Activated CD8-positive, alpha-beta T cell treated with anti-CD3 and anti-CD28 coated beads, Interleukin-2, amount 10 ng/mL, durations not matched to agents 7 days and 5 days (primary cell): ENCODE measurements at regions of chr3 and their contacts with region 1.

Region 1: GRCh38 chr3:112979240-112979832 is 4.4 kb upstream of the CD200R1 start:
- DNase-seq: peak; percentile 47
- ATAC-seq: no peak
- H3K4me3 Mint-ChIP-seq: no peak overlapping the region
- H3K27ac Mint-ChIP-seq: no peak overlapping the region
- H3K4me1 Mint-ChIP-seq: peaks cover 37% of the 10 kb centered on the region
- H3K27me3 Mint-ChIP-seq: no peaks in the 10 kb centered on the region

Region 2: GRCh38 chr3:112635671-112636070 is 343.7 kb before region 1 on chr3:
- CTCF ChIA-PET with region 1: interaction called, 10 read pairs
- POLR2A ChIA-PET with region 1: no interaction called
- DNase-seq: no peak
- ATAC-seq: no peak
- H3K4me3 Mint-ChIP-seq: no peak overlapping the region
- H3K27ac Mint-ChIP-seq: no peak overlapping the region
- H3K4me1 Mint-ChIP-seq: no peaks in the 10 kb centered on the region
- H3K27me3 Mint-ChIP-seq: peaks cover 7% of the 10 kb centered on the region

Region 3: DNA sequence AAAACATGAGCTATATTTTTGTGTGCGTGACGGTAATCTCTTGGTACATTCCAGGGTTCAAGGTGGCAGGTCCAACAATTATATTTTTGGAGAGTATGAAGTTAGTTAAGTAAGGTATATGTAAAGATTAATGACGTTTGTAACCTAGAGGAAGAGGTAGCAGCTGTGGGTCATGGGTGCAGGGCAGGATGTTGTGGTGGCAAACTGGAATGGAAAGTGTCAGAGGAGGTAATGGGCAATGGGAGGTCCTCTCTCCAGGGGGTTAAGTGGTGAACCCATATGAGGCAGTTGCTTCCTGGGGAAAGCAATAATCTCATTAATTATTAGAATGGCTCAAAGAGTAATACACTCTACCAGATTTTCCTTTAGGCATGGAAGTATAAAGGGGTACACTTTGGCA is 131.6 kb before region 1 on chr3:
- CTCF ChIA-PET with region 1: interaction called, 14 read pairs
- POLR2A ChIA-PET with region 1: interaction called, 9 read pairs
- DNase-seq: peak; percentile 83
- ATAC-seq: peak; percentile 86
- H3K4me3 Mint-ChIP-seq: peak overlapping the region; percentile 53
- H3K27ac Mint-ChIP-seq: peak overlapping the region; percentile 95
- H3K4me1 Mint-ChIP-seq: peaks cover 46% of the 10 kb centered on the region
- H3K27me3 Mint-ChIP-seq: no peaks in the 10 kb centered on the region

Region 4: GRCh38 chr3:113255100-113255853 is 275.9 kb after region 1 on chr3:
- CTCF ChIA-PET with region 1: no interaction called
- POLR2A ChIA-PET with region 1: no interaction called
- DNase-seq: no peak
- ATAC-seq: no peak
- H3K4me3 Mint-ChIP-seq: no peak overlapping the region
- H3K27ac Mint-ChIP-seq: no peak overlapping the region
- H3K4me1 Mint-ChIP-seq: no peaks in the 10 kb centered on the region
- H3K27me3 Mint-ChIP-seq: peaks cover 10% of the 10 kb centered on the region